ENCODE measurements at regions of chr6 and their contacts with region 1.

Region 1: GRCh38 chr6:144215932-144216667 is 65.8 kb downstream of the STX11 start:
- DNase-seq: peak in 1 of 2 donors; percentile 99
- H3K4me3 ChIP-seq: peak overlapping the region; percentile 68 to 73
- H3K27ac ChIP-seq: peak overlapping the region; percentile 92
- H3K4me1 ChIP-seq: peaks cover 11% of the 10 kb centered on the region
- H3K27me3 ChIP-seq: no peaks in the 10 kb centered on the region
- CTCF ChIP-seq: peak; percentile 11 to 69 (median 41)
- POLR2A ChIP-seq: peak in 1 of 2 donors; percentile 46

Region 2: GRCh38 chr6:143999406-143999805 is 216.7 kb before region 1 on chr6:
- intact Hi-C with region 1: no loop called
- DNase-seq: no peak
- H3K4me3 ChIP-seq: no peak overlapping the region
- H3K27ac ChIP-seq: no peak overlapping the region
- H3K4me1 ChIP-seq: no peaks in the 10 kb centered on the region
- H3K27me3 ChIP-seq: no peaks in the 10 kb centered on the region
- CTCF ChIP-seq: no peak
- POLR2A ChIP-seq: no peak

Region 3: GRCh38 chr6:144047688-144048087 is 168.4 kb before region 1 on chr6:
- intact Hi-C with region 1: no loop called
- DNase-seq: no peak
- H3K4me3 ChIP-seq: no peak overlapping the region
- H3K27ac ChIP-seq: no peak overlapping the region
- H3K4me1 ChIP-seq: no peaks in the 10 kb centered on the region
- H3K27me3 ChIP-seq: no peaks in the 10 kb centered on the region
- CTCF ChIP-seq: no peak
- POLR2A ChIP-seq: no peak

Region 4: DNA sequence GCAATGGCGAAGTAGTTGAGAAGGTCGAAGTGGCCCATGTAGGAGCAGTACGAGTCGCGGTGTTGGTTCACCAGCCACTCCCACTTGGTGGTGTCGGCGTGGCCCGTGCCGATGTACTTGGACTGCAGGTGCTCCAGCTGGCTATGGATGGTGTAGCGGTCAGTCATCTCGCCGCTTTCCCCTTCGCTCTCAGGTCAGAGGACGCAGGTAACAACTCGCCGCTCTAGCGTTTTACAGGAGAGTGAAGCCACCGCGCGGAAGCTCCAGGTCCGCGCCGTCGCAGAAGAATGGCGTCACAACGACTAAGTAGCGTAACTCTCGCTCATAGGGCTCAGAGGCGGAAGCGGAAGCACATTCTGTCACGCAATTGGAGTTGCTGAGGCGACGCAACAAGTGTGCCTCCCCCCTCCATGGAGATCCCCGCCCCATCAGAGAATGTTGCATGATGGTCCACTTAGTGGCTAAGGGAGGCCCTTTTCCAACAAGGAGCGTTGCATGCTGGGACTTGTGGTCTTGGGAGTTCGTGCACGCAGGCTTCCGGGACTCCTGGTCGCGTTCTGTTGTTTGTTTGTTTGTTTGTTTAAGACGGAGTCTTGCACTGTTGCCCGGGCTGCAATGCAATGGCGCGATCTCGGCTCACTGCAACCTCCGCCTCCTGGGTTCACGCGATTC is 120.6 kb before region 1 on chr6 and contains the start of gene SF3B5:
- intact Hi-C with region 1: loop called (anchors 5 kb)
- DNase-seq: peak; percentile 99 to 100
- H3K4me3 ChIP-seq: peak within 1 kb of the TSS; percentile 53 to 70
- H3K27ac ChIP-seq: peak within 1 kb of the TSS; percentile 58
- H3K4me1 ChIP-seq: peaks cover 20% of the 10 kb centered on the region
- H3K27me3 ChIP-seq: no peaks in the 10 kb centered on the region
- CTCF ChIP-seq: peak in 2 of 3 experiments; percentile 6 to 7
- POLR2A ChIP-seq: peak in 1 of 2 donors; percentile 42
- total RNA-seq, gene SF3B5: 134 TPM

Region 5: DNA sequence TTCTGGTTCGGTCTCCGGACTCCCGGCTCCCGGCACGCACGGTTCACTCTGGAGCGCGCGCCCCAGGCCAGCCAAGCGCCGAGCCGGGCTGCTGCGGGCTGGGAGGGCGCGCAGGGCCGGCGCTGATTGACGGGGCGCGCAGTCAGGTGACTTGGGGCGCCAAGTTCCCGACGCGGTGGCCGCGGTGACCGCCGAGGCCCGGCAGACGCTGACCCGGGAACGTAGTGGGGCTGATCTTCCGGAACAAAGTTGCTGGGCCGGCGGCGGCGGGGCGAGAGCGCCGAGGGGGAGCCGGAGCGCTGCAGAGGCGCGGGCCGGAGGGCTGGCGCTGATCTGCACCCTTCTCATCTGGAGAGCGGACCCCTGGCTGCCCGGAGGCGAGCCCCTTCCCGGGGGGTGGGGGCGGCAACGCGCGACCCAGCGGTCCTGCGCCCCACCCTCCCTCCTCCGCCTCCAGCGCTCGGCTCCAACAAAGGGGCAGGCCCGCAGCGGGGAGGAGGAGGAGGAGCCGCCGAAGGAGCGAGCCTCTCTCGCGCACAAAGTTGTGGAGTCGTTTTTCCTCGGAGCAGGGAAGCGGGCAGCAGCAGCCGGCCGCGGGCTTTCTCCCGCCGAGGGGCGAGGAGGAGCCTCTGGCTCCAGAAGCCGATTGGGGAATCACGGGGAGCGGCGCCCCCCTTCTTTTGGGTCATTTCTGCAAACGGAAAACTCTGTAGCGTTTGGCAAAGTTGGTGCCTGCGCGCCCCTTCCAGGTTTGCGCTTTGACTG is 68.9 kb after region 1 on chr6 and contains the start of gene UTRN:
- intact Hi-C with region 1: loop called (anchors 5 kb)
- DNase-seq: peak in 1 of 2 donors; percentile 91
- H3K4me3 ChIP-seq: peak within 1 kb of the TSS; percentile 68 to 75
- H3K27ac ChIP-seq: peak within 1 kb of the TSS; percentile 96
- H3K4me1 ChIP-seq: peaks cover 18% of the 10 kb centered on the region
- H3K27me3 ChIP-seq: no peaks in the 10 kb centered on the region
- CTCF ChIP-seq: no peak
- POLR2A ChIP-seq: peak in 1 of 2 donors; percentile 51
- total RNA-seq, gene UTRN: 160 TPM

Region 6: DNA sequence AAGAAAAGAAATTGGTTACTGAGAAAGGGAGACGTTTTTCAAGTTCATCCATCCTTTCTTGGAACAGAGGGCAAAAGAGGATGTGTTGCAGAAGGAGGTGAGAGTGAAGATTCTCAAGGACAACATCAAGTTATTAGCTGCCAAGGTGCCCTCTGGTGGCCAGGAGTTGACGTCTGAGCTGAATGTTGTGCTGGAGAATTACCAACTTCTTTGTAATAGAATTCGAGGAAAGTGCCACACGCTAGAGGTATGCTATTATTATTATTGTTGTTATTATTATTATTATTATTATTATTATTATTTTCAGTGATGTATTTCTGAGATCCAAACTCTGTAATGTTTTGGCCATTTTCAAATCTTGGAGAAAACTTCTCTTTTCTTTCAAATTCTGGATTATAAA is 266.0 kb after region 1 on chr6:
- intact Hi-C with region 1: loop called (anchors 10 kb)
- DNase-seq: no peak
- H3K4me3 ChIP-seq: no peak overlapping the region
- H3K27ac ChIP-seq: no peak overlapping the region
- H3K4me1 ChIP-seq: no peaks in the 10 kb centered on the region
- H3K27me3 ChIP-seq: no peaks in the 10 kb centered on the region
- CTCF ChIP-seq: peak; percentile 13 to 66 (median 60)
- POLR2A ChIP-seq: no peak

Measured in vagina (tissue), 2 donors.